Transverse colon (tissue), 4 donors: ENCODE measurements at regions of chr12 and their contacts with region 1.

Region 1: DNA sequence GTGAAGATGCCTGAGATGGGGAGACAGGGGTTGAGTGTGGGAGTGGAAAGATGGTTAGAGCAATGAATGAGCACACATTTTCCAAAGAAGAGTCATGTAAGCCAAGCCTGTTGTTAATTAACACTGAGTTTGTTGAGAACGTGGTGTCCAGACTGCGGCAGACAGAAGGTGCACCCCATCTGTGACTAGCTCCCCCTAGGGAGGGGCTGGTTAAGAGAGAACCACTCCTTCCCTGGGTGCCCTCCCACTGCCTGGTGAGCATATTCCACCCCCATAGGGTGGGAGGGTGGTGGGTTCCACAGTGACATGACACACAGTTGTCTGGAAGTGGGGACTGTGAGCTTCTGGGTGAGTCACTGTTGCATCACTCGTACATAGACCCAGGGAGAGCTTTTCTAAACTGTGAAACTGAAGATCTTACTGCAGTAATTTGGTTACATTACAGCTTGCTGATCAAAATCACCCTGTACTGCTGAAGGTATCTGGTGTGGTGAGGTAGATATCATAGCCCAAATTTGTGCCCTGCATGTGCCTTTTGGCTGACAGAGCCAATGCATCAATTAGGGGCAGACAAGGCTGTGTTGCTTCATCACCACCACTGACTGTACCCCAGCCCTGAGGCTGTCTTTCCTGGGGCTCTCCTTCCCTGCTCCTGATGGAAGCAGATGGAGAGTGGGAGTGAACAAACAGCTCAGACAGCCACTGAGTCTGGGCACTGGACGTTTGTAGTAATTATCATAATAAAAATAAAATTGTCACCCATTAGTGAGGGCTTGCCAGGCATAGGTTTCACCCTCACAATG is 150.9 kb downstream of the EMP1 start:
- DNase-seq: no peak
- H3K4me3 ChIP-seq: no peak overlapping the region
- H3K27ac ChIP-seq: no peak overlapping the region
- H3K4me1 ChIP-seq: no peaks in the 10 kb centered on the region
- H3K27me3 ChIP-seq: no peaks in the 10 kb centered on the region
- CTCF ChIP-seq: no peak
- EP300 ChIP-seq: no peak
- POLR2A ChIP-seq: no peak

Region 2: GRCh38 chr12:14138495-14138894 is 791.1 kb after region 1 on chr12:
- in situ Hi-C with region 1: loop called in 1 of 4 experiments (anchors 25 kb)
- intact Hi-C with region 1: no loop called
- DNase-seq: no peak
- H3K4me3 ChIP-seq: no peak overlapping the region
- H3K27ac ChIP-seq: no peak overlapping the region
- H3K4me1 ChIP-seq: no peaks in the 10 kb centered on the region
- H3K27me3 ChIP-seq: no peaks in the 10 kb centered on the region
- CTCF ChIP-seq: no peak
- EP300 ChIP-seq: no peak
- POLR2A ChIP-seq: no peak